Activated T-helper 1 cell treated with anti-CD3 and anti-CD28 coated beads, Interleukin-12 subunit alpha, Interleukin-12 subunit beta, Interleukin-2, Interleukin-4 antibody, amounts not matched to agents 30 ng/mL and 10 ng/mL and 1 ng/mL, durations not matched to agents 14 hours and 24 hours and 36 hours (primary cell): ENCODE measurements at regions of chr18 and their contacts with region 1.

Region 1: GRCh38 chr18:59085797-59086196 is 53.9 kb upstream of the SEC11C start:
- DNase-seq: no peak
- H3K4me3 Mint-ChIP-seq: no peak overlapping the region
- H3K27ac Mint-ChIP-seq: no peak overlapping the region
- H3K4me1 Mint-ChIP-seq: peaks cover 5% of the 10 kb centered on the region
- H3K27me3 Mint-ChIP-seq: peaks cover 14% of the 10 kb centered on the region

Region 2: DNA sequence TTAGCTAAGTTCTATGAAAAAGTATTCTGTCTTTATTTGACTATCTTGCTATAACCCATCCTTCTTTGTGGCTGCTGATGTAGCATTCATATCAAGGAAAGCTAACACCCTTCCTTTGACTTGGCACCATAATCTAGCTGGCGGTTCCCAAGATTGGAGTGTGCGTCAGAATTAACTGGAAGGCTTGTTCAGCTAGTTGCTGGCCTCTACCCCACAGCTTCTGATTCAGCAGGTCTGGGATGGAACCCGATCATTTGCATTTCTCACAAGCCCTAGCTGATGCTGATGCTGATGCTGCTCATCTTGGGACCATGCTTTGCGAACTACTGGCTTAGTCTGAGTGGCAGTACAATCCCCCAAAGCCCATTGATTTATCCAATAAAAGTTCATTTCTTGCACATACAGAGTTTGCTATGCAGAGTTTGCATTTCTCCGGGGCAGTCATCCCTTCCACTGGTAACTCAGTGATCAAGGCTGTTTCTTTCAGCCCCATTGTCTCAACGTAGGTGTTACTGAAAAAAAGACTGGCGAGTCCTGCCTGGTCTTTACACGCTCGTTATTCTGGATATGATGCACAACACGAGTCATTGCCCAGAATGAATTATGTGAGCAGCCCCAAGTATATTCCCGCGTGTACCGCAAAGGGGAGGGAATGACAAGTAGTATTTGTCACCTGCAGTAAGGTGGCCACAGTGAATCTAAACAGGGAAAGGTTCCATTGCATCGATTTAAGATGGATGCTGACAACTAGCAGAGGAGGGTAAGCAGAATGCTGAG is 124.7 kb before region 1 on chr18:
- intact Hi-C with region 1: no loop called
- DNase-seq: no peak
- H3K4me3 Mint-ChIP-seq: no peak overlapping the region
- H3K27ac Mint-ChIP-seq: no peak overlapping the region
- H3K4me1 Mint-ChIP-seq: no peaks in the 10 kb centered on the region
- H3K27me3 Mint-ChIP-seq: peaks cover 5% of the 10 kb centered on the region

Region 3: GRCh38 chr18:59139371-59140298 is 53.8 kb after region 1 on chr18 and contains the start of gene SEC11C:
- intact Hi-C with region 1: loop called (anchors 2 kb)
- DNase-seq: peak; percentile 96
- H3K4me3 Mint-ChIP-seq: peak within 1 kb of the TSS; percentile 94
- H3K27ac Mint-ChIP-seq: peak within 1 kb of the TSS; percentile 98
- H3K4me1 Mint-ChIP-seq: peaks cover 34% of the 10 kb centered on the region
- H3K27me3 Mint-ChIP-seq: peaks cover 19% of the 10 kb centered on the region
- total RNA-seq, gene SEC11C: 147 and 148 TPM in 2 replicates

Region 4: DNA sequence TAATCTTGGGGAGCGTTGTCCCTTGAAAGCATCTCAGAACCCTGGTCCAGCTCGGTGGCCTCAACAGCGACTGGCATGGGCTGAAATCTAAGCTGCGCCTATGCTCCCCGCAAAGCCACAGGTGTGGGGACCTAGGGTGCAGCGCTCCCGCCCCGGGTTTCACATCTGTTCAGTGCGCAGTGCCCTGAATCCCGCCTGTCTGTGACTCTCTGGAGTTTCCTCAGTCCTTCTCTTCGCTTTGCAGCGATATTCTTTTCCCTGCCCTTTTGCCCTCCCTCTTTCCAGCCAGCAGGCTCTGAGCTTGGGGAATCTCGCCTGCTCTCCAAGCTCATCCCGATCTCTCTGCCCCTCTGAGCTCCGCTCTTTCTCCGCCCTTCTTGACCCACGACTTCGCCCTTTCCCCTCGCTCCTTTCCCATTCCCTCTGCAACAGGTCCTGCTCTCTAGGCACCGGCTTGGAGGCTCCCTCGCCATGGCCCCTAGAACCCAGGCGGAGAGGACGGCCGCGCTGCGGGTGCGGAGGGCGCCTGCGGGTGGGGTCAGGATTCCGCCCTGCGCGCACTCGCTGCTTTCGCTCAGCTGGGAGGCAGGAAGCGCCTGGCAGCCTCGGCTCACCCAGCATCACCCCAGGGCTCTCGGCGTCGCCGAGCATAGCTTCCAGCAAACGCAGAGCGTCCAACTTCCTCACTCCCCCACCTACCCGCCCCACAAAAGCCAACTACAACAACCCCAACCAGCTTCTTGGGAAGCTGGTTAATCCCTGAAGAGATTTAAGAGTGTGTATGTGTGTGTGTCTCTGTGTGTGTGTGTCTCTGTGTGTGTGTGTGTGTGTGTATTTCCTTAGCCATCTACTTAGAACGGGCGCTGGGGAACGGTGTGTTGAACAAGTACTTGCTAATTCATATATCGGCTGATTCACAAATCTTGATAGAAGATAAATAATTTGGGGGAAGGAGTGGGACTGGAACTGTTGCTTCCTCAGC is 135.3 kb after region 1 on chr18:
- intact Hi-C with region 1: loop called (anchors 5 kb)
- DNase-seq: no peak
- H3K4me3 Mint-ChIP-seq: no peak overlapping the region
- H3K27ac Mint-ChIP-seq: no peak overlapping the region
- H3K4me1 Mint-ChIP-seq: no peaks in the 10 kb centered on the region
- H3K27me3 Mint-ChIP-seq: peaks cover 61% of the 10 kb centered on the region

Region 5: GRCh38 chr18:59308248-59308937 is 222.6 kb after region 1 on chr18:
- intact Hi-C with region 1: loop called (anchors 1 kb)
- DNase-seq: peak; percentile 61
- H3K4me3 Mint-ChIP-seq: peak overlapping the region; percentile 63
- H3K27ac Mint-ChIP-seq: no peak overlapping the region
- H3K4me1 Mint-ChIP-seq: no peaks in the 10 kb centered on the region
- H3K27me3 Mint-ChIP-seq: peaks cover 44% of the 10 kb centered on the region

Region 6: GRCh38 chr18:59402432-59403090 is 316.8 kb after region 1 on chr18:
- intact Hi-C with region 1: loop called (anchors 2 kb)
- DNase-seq: peak; percentile 59
- H3K4me3 Mint-ChIP-seq: no peak overlapping the region
- H3K27ac Mint-ChIP-seq: no peak overlapping the region
- H3K4me1 Mint-ChIP-seq: no peaks in the 10 kb centered on the region
- H3K27me3 Mint-ChIP-seq: peaks cover 5% of the 10 kb centered on the region